HepG2 (cell line): ENCODE measurements at regions of chr11 and their contacts with region 1.

Region 1: GRCh38 chr11:12235947-12236743 is 125.8 kb downstream of the MICAL2 start:
- DNase-seq: peak; percentile 58
- ATAC-seq: peak; percentile 78
- H3K4me3 ChIP-seq: no peak overlapping the region
- H3K27ac ChIP-seq: no peak overlapping the region
- H3K4me1 ChIP-seq: peaks cover 26% of the 10 kb centered on the region
- H3K27me3 ChIP-seq: no peaks in the 10 kb centered on the region
- CTCF ChIP-seq: peak; percentile 69
- EP300 ChIP-seq: no peak
- POLR2A ChIP-seq: no peak
- RAD21 ChIP-seq: peak; percentile 58

Region 2: GRCh38 chr11:12043959-12044819 is 192.0 kb before region 1 on chr11:
- CTCF ChIA-PET with region 1: interaction called, 57 read pairs
- POLR2A ChIA-PET with region 1: no interaction called
- in situ Hi-C with region 1: loop called (anchors 5 kb)
- intact Hi-C with region 1: loop called (anchors 1 kb)
- DNase-seq: peak; percentile 87
- ATAC-seq: peak; percentile 89
- H3K4me3 ChIP-seq: peak overlapping the region in 1 of 3 experiments; percentile 50; a peak in 2 of 6 replicates
- H3K27ac ChIP-seq: no peak overlapping the region
- H3K4me1 ChIP-seq: peaks cover 26% of the 10 kb centered on the region
- H3K27me3 ChIP-seq: no peaks in the 10 kb centered on the region; a peak in 1 of 5 replicates
- CTCF ChIP-seq: peak; percentile 94
- EP300 ChIP-seq: peak in 1 of 2 experiments; percentile 32; a peak in 1 of 4 replicates
- POLR2A ChIP-seq: no peak
- RAD21 ChIP-seq: peak; percentile 82

Region 3: GRCh38 chr11:12087075-12088004 is 148.8 kb before region 1 on chr11:
- CTCF ChIA-PET with region 1: interaction called, 8 read pairs
- POLR2A ChIA-PET with region 1: no interaction called
- in situ Hi-C with region 1: no loop called
- intact Hi-C with region 1: loop called (anchors 10 kb)
- DNase-seq: no peak
- ATAC-seq: peak; percentile 55
- H3K4me3 ChIP-seq: no peak overlapping the region
- H3K27ac ChIP-seq: no peak overlapping the region
- H3K4me1 ChIP-seq: peaks cover 71% of the 10 kb centered on the region
- H3K27me3 ChIP-seq: no peaks in the 10 kb centered on the region; a peak in 1 of 5 replicates
- CTCF ChIP-seq: no peak
- EP300 ChIP-seq: no peak
- POLR2A ChIP-seq: no peak
- RAD21 ChIP-seq: no peak

Region 4: GRCh38 chr11:12122083-12122482 is 114.1 kb before region 1 on chr11:
- CTCF ChIA-PET with region 1: interaction called, 13 read pairs
- POLR2A ChIA-PET with region 1: no interaction called
- in situ Hi-C with region 1: loop called (anchors 10 kb)
- intact Hi-C with region 1: loop called (anchors 5 kb)
- DNase-seq: peak; percentile 32
- ATAC-seq: peak; percentile 92
- H3K4me3 ChIP-seq: no peak overlapping the region
- H3K27ac ChIP-seq: no peak overlapping the region
- H3K4me1 ChIP-seq: peaks cover 21% of the 10 kb centered on the region
- H3K27me3 ChIP-seq: no peaks in the 10 kb centered on the region
- CTCF ChIP-seq: peak; percentile 56
- EP300 ChIP-seq: no peak
- POLR2A ChIP-seq: no peak
- RAD21 ChIP-seq: peak; percentile 13; the same call in 1 of the 2 replicates

Region 5: DNA sequence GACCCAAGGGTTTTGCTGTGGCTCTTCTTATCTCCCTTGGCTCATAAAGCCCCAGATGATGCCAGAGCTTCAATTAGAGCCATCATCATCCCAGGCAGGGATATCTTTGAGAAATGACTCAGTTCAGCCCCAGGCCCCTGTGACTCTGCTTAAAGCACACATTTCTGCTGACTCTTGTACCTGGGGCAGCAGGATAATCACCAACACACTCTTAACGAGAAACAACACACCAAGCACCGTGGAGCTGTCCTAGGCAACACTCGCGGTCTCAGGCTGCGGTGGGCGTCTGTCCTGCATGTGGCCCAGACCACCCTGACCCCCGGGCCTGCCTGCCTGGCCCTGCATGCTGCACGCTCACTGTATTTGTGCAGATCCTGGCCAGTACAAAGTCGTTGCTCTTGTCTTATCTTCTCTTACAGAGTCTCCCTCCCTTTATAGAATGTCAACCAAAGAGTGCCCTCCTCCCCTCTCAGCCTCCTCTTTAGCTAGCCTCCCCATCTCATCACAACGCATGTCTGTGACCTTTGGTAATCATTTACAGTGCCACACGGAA is 27.1 kb after region 1 on chr11:
- CTCF ChIA-PET with region 1: no interaction called
- POLR2A ChIA-PET with region 1: no interaction called
- in situ Hi-C with region 1: no loop called
- intact Hi-C with region 1: no loop called
- DNase-seq: no peak
- ATAC-seq: no peak
- H3K4me3 ChIP-seq: no peak overlapping the region
- H3K27ac ChIP-seq: no peak overlapping the region
- H3K4me1 ChIP-seq: peaks cover 14% of the 10 kb centered on the region
- H3K27me3 ChIP-seq: no peaks in the 10 kb centered on the region
- CTCF ChIP-seq: no peak
- EP300 ChIP-seq: no peak
- POLR2A ChIP-seq: no peak
- RAD21 ChIP-seq: no peak